Psoas muscle (tissue), 8 donors: ENCODE measurements at regions of chr17 and their contacts with region 1.

Region 1: GRCh38 chr17:58710936-58711775 is 18.8 kb downstream of the RAD51C start:
- DNase-seq: no peak
- ATAC-seq: no peak
- H3K4me3 ChIP-seq: no peak overlapping the region
- H3K27ac ChIP-seq: no peak overlapping the region
- H3K4me1 ChIP-seq: no peaks in the 10 kb centered on the region
- H3K27me3 ChIP-seq: no peaks in the 10 kb centered on the region
- CTCF ChIP-seq: peak; percentile 62

Region 2: GRCh38 chr17:58747674-58748073 is 36.5 kb after region 1 on chr17:
- intact Hi-C with region 1: no loop called
- DNase-seq: no peak
- ATAC-seq: no peak
- H3K4me3 ChIP-seq: no peak overlapping the region
- H3K27ac ChIP-seq: no peak overlapping the region
- H3K4me1 ChIP-seq: no peaks in the 10 kb centered on the region
- H3K27me3 ChIP-seq: no peaks in the 10 kb centered on the region
- CTCF ChIP-seq: no peak

Region 3: GRCh38 chr17:59004338-59005111 is 293.4 kb after region 1 on chr17:
- intact Hi-C with region 1: loop called (anchors 5 to 10 kb)
- DNase-seq: peak in 1 of 2 donors; percentile 24
- ATAC-seq: peak; percentile 70 to 92 (median 75)
- H3K4me3 ChIP-seq: no peak overlapping the region
- H3K27ac ChIP-seq: no peak overlapping the region
- H3K4me1 ChIP-seq: no peaks in the 10 kb centered on the region
- H3K27me3 ChIP-seq: no peaks in the 10 kb centered on the region
- CTCF ChIP-seq: peak; percentile 95